ENCODE measurements at regions of chr1 and their contacts with region 1.

Region 1: DNA sequence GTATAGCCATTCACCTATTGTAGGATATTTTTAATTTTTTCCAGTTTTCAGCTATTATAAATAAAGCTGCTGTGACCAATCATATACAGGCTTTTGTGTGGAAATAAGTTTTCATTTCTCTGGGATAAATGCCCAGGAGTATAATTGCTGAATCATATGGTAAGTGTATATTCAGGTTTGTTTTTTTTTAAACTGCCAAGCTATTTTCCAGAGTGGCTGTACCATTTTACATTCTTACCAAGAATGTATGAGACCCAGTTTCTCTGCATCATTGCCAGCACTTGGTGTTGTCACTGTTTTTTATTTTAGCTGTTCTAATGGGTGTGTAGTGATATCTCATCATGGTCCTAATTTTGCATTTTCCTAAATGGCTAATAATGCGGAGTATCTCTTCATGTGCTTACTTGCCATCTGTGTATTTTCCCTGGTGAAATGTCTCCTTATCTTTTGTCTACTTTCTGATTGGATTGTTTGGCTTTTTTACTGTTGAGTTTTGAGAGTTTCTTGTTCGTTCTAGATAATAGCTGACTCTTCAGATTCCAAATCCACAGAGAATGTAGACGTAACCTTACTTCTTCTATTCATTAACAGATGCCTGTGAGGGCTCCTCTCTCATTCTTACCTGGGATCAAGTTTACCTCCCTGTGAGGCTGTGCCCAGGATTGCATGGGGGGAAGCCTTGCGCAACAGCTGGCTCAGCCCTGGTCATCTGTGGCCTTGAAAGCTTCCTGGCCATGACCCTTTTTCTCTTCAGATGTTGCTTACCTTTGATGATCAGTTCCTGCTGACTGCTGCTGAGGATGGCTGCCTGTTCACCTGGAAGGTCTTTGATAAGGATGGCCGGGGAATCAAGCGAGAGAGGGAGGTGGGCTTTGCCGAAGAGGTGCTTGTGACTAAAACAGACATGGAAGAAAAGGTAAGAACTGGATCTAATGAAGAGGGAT is 42.6 kb downstream of the CFAP57 start:
- DNase-seq: no peak
- ATAC-seq: no peak
- H3K4me3 Mint-ChIP-seq: no peak overlapping the region
- H3K27ac Mint-ChIP-seq: no peak overlapping the region
- H3K4me1 Mint-ChIP-seq: no peaks in the 10 kb centered on the region
- H3K27me3 Mint-ChIP-seq: peaks cover 3% of the 10 kb centered on the region

Region 2: GRCh38 chr1:43227143-43227764 is 12.5 kb after region 1 on chr1:
- CTCF ChIA-PET with region 1: interaction called, 13 read pairs
- POLR2A ChIA-PET with region 1: no interaction called
- DNase-seq: peak; percentile 90
- ATAC-seq: peak; percentile 87
- H3K4me3 Mint-ChIP-seq: no peak overlapping the region
- H3K27ac Mint-ChIP-seq: no peak overlapping the region
- H3K4me1 Mint-ChIP-seq: no peaks in the 10 kb centered on the region
- H3K27me3 Mint-ChIP-seq: peaks cover 2% of the 10 kb centered on the region

Region 3: DNA sequence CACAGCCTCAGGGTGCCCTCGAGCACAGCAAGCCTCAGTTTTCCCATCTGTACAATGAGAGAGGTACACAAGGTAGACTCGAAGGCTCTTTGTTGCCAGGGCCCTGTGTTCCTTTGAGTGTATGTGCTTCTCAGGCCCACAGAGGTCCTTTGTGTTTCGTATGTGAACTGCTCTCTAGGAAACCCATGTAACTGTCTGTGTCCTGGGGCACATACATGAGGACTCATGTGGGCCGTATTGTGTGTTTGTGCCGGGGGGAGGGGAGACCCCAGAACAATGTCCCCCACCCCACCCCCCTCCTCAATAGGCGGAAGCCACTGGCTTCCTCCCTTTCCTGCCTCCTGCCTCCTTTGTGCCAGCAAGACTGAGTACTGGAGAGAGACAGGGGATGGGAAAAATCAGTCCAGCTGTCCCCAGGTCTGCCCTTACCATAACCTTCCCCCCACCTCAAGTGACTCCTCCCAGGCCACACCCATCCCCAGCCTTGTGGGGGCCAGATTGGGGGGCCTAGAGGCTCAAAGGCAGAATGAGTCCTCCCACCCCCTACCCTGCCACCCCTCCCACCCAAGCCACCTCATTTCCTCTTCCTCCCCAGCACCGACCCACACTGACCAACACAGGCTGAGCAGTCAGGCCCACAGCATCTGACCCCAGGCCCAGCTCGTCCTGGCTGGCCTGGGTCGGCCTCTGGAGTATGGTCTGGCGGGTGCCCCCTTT is 85.8 kb after region 1 on chr1 and contains the start of gene TIE1:
- CTCF ChIA-PET with region 1: no interaction called
- POLR2A ChIA-PET with region 1: no interaction called
- DNase-seq: no peak
- ATAC-seq: no peak
- H3K4me3 Mint-ChIP-seq: no peak within 1 kb of the TSS
- H3K27ac Mint-ChIP-seq: no peak within 1 kb of the TSS
- H3K4me1 Mint-ChIP-seq: peaks cover 21% of the 10 kb centered on the region
- H3K27me3 Mint-ChIP-seq: peaks cover 4% of the 10 kb centered on the region
- total RNA-seq, gene TIE1: 0.53 to 1.3 TPM

Region 4: DNA sequence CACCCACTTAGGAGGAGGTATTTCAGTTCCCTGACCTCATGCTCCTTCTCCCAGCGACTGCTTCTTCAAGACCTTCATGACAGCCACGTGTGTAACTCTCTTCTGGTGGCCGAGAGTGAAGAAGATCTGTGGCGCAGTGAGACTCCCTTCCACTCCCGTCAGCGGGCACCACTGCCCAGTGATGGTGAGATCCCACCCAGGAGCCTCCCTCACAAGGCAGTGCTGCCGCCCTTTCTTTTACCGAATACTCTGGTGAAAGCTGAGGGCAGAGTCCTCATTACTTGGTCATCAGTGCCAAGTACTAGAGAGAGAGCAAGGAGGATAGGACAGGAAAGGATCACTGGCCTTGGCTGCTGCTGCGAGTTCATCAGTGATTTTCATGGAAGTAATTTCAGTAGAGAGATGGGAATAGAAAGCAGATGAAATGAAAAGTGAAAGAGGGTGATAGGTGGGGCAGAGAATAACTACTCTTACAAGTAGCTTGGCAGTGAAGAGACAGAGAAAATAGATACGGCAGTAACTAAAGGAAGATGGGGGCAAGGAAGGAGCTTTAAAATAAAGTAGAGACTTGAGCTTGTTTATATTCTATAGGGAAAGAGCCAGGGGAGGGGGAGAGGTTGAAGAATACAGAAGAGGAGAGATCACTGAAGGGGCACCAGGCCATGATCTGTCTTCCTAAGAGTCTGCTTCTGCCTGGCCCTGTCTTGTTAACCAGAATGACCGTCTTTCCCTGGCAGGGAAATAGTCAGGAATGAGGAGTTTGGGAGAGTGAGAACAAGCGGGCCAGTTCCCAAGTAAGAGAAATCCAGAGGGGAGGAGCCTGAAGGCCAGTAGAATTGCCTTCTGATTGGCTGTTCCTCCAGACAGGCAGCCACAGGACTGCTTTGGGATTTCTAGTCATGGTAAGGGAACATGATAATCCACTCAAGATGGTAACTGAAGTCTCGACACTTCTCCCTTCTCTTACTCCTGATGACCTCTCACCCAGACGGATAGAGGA is 220.7 kb after region 1 on chr1:
- CTCF ChIA-PET with region 1: no interaction called
- POLR2A ChIA-PET with region 1: no interaction called
- DNase-seq: no peak
- ATAC-seq: no peak
- H3K4me3 Mint-ChIP-seq: no peak overlapping the region
- H3K27ac Mint-ChIP-seq: no peak overlapping the region
- H3K4me1 Mint-ChIP-seq: no peaks in the 10 kb centered on the region
- H3K27me3 Mint-ChIP-seq: no peaks in the 10 kb centered on the region

Region 5: GRCh38 chr1:43711049-43711448 is 496.3 kb after region 1 on chr1:
- CTCF ChIA-PET with region 1: no interaction called
- POLR2A ChIA-PET with region 1: no interaction called
- DNase-seq: no peak
- ATAC-seq: no peak
- H3K4me3 Mint-ChIP-seq: no peak overlapping the region
- H3K27ac Mint-ChIP-seq: no peak overlapping the region
- H3K4me1 Mint-ChIP-seq: peaks cover 30% of the 10 kb centered on the region
- H3K27me3 Mint-ChIP-seq: no peaks in the 10 kb centered on the region